MCF 10A (cell line): ENCODE measurements at regions of chr15 and their contacts with region 1.

Region 1: DNA sequence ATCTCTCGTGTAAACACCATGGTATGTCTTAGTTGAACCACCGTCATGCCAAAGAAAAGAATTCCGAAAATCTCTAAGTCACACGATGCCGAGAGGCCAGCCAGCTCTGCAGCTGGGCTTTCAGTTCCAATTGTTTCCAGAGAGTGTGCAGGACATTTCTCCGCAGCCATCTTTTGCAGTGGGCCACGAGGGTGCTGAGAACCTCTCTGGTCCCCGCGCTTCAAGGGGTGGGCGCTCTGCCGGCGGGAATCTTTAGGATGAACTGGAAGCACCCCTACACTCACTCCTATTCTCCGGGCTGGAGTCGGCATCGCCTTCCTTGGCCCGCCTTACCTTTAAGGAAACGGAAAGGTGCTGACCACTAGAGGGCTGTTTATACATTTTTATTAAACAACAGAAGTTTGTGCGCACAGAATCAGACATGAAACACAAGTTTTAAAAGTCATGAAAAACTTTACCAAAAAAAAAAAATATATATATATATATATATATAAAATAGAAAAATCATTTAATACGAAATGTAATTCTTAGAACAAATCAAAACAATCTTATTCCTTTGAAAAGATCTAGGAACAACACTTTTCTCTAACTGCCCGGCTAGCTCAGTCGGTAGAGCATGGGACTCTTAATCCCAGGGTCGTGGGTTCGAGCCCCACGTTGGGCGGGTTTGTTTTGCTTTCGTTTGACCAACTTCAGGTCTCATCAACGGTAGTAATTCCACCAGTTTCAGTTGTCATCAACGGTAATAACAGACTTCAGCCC is 12.5 kb upstream of the MORF4L1 start:
- DNase-seq: peak; percentile 84
- H3K4me3 Mint-ChIP-seq: peak overlapping the region; percentile 77
- H3K27ac Mint-ChIP-seq: peak overlapping the region; percentile 72
- H3K4me1 Mint-ChIP-seq: no peaks in the 10 kb centered on the region
- H3K27me3 Mint-ChIP-seq: no peaks in the 10 kb centered on the region
- CTCF ChIP-seq: peak; percentile 48

Region 2: DNA sequence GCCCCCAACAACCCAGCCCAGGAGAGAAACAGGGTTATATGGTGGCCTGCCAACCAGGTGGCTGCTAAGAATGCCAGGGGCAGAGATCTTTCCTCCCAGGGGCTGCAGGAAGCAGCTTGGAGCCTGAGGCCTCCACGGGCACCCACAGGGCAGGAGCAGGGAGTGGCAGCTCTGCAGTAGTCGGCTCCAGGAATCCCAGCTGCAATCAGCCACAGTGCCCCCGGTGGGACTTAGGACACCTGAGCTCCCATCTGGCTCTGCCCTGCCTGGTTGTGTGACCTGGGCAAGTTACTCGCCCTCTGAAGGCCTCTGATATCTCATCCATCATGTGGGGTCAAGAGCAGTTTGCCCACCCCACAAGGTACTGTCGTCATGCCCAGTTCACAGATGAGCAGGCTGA is 64.5 kb before region 1 on chr15:
- CTCF ChIA-PET with region 1: no interaction called
- POLR2A ChIA-PET with region 1: no interaction called
- intact Hi-C with region 1: loop called (anchors 1 kb)
- DNase-seq: no peak
- H3K4me3 Mint-ChIP-seq: no peak overlapping the region
- H3K27ac Mint-ChIP-seq: peak overlapping the region; percentile 39
- H3K4me1 Mint-ChIP-seq: peaks cover 19% of the 10 kb centered on the region
- H3K27me3 Mint-ChIP-seq: no peaks in the 10 kb centered on the region
- CTCF ChIP-seq: no peak